Activated naive CD4-positive, alpha-beta T cell treated with anti-CD3 and anti-CD28 coated beads for 36 hours (primary cell): ENCODE measurements at regions of chr14 and their contacts with region 1.

Region 1: GRCh38 chr14:35285168-35286002 is 6.8 kb upstream of the PSMA6 start:
- DNase-seq: peak; percentile 47
- H3K4me3 Mint-ChIP-seq: peak overlapping the region; percentile 35
- H3K27ac Mint-ChIP-seq: peak overlapping the region; percentile 96
- H3K4me1 Mint-ChIP-seq: peaks cover 55% of the 10 kb centered on the region
- H3K27me3 Mint-ChIP-seq: no peaks in the 10 kb centered on the region

Region 2: GRCh38 chr14:34539407-34540180 is 745.8 kb before region 1 on chr14 and contains the start of gene EAPP:
- CTCF ChIA-PET with region 1: interaction called, 3 read pairs
- intact Hi-C with region 1: loop called (anchors 5 kb)
- DNase-seq: peak; percentile 98
- H3K4me3 Mint-ChIP-seq: peak within 1 kb of the TSS; percentile 95
- H3K27ac Mint-ChIP-seq: peak within 1 kb of the TSS; percentile 98
- H3K4me1 Mint-ChIP-seq: peaks cover 32% of the 10 kb centered on the region
- H3K27me3 Mint-ChIP-seq: no peaks in the 10 kb centered on the region
- total RNA-seq, gene EAPP: 34.0 to 35.4 TPM

Region 3: GRCh38 chr14:35229495-35230089 is 55.8 kb before region 1 on chr14:
- CTCF ChIA-PET with region 1: interaction called, 20 read pairs
- intact Hi-C with region 1: loop called (anchors 2 kb)
- DNase-seq: no peak
- H3K4me3 Mint-ChIP-seq: no peak overlapping the region
- H3K27ac Mint-ChIP-seq: peak overlapping the region; percentile 37
- H3K4me1 Mint-ChIP-seq: peaks cover 23% of the 10 kb centered on the region
- H3K27me3 Mint-ChIP-seq: no peaks in the 10 kb centered on the region

Region 4: GRCh38 chr14:35268946-35269345 is 16.4 kb before region 1 on chr14:
- CTCF ChIA-PET with region 1: no interaction called
- intact Hi-C with region 1: no loop called
- DNase-seq: no peak
- H3K4me3 Mint-ChIP-seq: no peak overlapping the region
- H3K27ac Mint-ChIP-seq: no peak overlapping the region
- H3K4me1 Mint-ChIP-seq: no peaks in the 10 kb centered on the region
- H3K27me3 Mint-ChIP-seq: no peaks in the 10 kb centered on the region

Region 5: DNA sequence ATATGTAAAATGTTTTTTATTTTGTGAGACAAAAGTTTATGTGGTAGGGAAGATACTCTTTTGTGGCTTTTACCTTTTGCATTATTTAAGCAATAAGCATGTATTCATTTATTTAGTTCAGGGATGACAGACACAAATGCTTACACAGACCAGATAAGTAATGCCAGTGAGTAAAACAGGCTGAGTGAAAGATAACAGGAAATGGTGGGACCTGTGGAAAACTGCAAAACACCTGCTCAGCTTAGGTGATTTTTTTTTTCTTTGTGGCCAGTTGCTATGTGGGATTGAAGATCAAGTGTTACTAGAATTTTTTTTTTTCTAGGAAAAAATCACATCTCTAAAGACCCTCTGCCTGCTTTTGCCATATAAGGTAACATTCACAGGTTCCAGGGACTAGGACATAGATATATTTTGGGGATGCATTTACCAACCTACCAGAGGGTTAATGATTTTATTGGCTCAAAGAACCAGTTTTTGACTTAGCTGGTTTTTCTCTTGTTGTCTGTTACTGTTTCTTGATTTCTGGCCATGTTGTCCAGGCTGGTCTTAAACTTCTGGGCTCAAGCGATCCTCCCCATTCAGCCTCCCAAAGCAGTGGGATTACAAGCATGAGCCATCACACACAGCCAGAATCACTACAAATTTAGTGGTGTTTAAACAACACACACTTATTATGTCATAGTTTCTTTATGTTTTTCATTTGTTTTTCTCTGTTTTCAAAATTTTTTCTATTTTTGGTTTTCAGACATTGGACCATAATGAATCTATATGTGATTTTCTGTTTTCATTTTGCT is 16.5 kb after region 1 on chr14:
- CTCF ChIA-PET with region 1: interaction called, 9 read pairs
- intact Hi-C with region 1: loop called (anchors 1 kb)
- DNase-seq: peak; percentile 14
- H3K4me3 Mint-ChIP-seq: peak overlapping the region; percentile 27
- H3K27ac Mint-ChIP-seq: peak overlapping the region; percentile 89
- H3K4me1 Mint-ChIP-seq: peaks cover 68% of the 10 kb centered on the region
- H3K27me3 Mint-ChIP-seq: no peaks in the 10 kb centered on the region

Region 6: DNA sequence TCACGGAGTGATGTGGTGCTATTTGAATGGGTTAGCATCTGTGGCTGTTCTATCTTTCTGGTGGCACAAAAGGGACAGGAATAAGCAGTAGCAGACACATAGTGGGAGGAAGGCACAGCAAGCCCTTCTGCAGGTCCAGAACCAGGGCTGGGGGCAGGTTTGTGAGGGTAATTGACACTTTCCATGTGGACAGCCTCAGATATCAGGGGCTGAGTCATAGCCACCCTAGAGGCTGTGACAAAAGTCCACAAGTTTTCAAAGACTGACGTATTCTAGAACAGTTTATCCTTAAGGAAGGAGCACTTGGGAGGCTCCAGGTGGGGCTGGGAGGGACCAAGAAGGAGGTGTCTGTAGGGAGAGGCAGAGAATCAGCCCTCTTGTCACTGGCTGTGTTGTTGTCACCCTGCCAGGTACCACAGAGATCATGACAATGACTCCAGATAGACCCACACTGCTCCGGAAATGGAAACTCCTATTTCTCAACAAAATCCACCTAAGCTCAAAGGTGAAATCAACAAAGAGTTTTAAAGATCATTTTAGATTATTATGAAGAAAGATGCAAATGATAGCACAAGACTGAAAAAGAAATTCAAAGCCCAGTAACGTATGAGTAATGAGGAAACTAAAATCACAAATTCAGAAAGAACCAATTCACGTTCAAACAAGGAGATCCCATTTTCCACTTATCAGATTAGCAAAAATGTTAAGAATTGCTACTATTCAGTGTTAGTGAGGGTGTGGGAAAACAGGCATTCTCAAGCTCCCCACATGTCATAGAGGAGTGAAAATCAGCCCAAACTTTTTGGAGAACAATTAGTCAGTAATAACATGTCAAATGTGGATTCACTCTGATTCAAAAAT is 70.8 kb after region 1 on chr14:
- CTCF ChIA-PET with region 1: interaction called, 3 read pairs
- intact Hi-C with region 1: loop called (anchors 1 kb)
- DNase-seq: peak; percentile 86
- H3K4me3 Mint-ChIP-seq: peak overlapping the region; percentile 12
- H3K27ac Mint-ChIP-seq: peak overlapping the region; percentile 91
- H3K4me1 Mint-ChIP-seq: peaks cover 46% of the 10 kb centered on the region
- H3K27me3 Mint-ChIP-seq: no peaks in the 10 kb centered on the region